CD8-positive, alpha-beta T cell (primary cell): ENCODE measurements at regions of chr16 and their contacts with region 1.

Region 1: GRCh38 chr16:20887207-20887606 is 13.0 kb downstream of the DCUN1D3 start:
- DNase-seq: no peak
- ATAC-seq: no peak
- H3K4me3 ChIP-seq: no peak overlapping the region
- H3K4me3 Mint-ChIP-seq: no peak overlapping the region
- H3K27ac ChIP-seq: no peak overlapping the region
- H3K27ac Mint-ChIP-seq: no peak overlapping the region
- H3K4me1 ChIP-seq: no peaks in the 10 kb centered on the region
- H3K4me1 Mint-ChIP-seq: peaks cover 14% of the 10 kb centered on the region
- H3K27me3 ChIP-seq: no peaks in the 10 kb centered on the region
- H3K27me3 Mint-ChIP-seq: no peaks in the 10 kb centered on the region
- CTCF ChIP-seq: no peak

Region 2: DNA sequence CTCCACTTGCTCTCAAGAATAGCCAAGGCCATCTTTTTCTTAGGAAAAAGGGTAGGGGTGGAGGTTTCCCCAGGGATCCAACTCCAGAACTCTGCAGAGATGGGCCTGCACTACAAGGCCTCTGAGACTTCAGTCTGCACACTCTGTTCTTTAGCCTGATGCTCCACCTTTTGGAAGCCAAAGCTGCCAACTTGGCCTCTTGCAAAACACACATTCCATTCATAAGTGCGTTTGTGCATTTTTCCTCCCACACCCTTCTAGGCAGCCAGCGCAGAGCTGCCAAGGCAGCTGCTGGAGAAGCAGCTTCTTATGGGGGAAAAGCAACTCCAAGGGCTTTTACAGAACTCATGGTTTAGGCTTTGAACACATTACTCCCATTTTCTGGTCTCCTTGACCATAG is 35.6 kb before region 1 on chr16:
- CTCF ChIA-PET with region 1: no interaction called
- POLR2A ChIA-PET with region 1: no interaction called
- intact Hi-C with region 1: no loop called
- DNase-seq: no peak
- ATAC-seq: no peak
- H3K4me3 ChIP-seq: no peak overlapping the region
- H3K4me3 Mint-ChIP-seq: no peak overlapping the region
- H3K27ac ChIP-seq: no peak overlapping the region
- H3K27ac Mint-ChIP-seq: no peak overlapping the region
- H3K4me1 ChIP-seq: no peaks in the 10 kb centered on the region
- H3K4me1 Mint-ChIP-seq: peaks cover 5% of the 10 kb centered on the region
- H3K27me3 ChIP-seq: no peaks in the 10 kb centered on the region
- H3K27me3 Mint-ChIP-seq: no peaks in the 10 kb centered on the region
- CTCF ChIP-seq: no peak

Region 3: DNA sequence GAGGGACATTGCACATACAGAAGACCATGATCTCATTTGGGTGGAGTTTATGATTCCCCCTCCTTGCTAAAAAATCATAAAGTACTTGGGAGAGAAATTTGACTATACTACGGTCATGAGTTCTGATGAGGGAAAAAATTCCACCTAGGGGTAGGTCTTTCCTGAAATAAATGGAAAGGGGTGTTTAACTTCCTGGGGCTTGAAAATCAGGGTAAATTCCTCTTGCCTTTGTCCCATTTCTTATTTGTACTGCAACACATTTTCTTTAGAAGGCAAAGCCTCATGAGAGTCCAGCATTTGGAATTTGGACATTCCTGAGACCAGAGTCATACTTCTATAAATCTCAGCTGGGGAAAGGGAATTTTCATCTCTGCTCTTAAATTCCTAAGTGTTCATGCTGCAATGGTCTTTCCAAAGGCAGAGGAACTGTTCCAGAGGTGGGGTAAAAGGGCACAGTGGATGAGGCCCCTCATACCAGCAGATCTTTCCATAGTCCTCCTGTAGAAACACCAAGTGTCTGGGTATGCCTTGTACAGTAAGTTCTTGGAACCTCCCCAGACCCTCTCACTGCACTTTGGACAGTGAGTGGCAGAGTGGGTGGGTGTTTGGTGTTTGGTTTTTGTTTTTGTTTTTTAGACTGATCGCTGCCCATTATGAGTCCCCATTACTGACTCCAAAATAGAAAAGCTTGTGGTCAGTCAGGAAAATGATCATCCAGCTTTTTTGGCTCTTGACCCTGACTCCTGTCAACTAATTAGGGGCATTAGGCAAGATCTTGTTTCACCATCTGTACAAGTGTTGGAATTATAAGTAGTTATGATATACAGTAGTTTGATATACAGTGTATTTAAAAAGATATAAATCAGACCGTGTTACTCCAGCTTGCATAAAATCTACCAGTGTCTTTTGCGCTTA is 19.4 kb after region 1 on chr16:
- CTCF ChIA-PET with region 1: no interaction called
- POLR2A ChIA-PET with region 1: interaction called, 4 read pairs
- intact Hi-C with region 1: loop called in 1 of 2 experiments (anchors 2 kb)
- DNase-seq: no peak
- ATAC-seq: no peak
- H3K4me3 ChIP-seq: no peak overlapping the region
- H3K4me3 Mint-ChIP-seq: no peak overlapping the region
- H3K27ac ChIP-seq: no peak overlapping the region
- H3K27ac Mint-ChIP-seq: no peak overlapping the region
- H3K4me1 ChIP-seq: peaks cover 21% of the 10 kb centered on the region
- H3K4me1 Mint-ChIP-seq: peaks cover 48% of the 10 kb centered on the region
- H3K27me3 ChIP-seq: no peaks in the 10 kb centered on the region
- H3K27me3 Mint-ChIP-seq: no peaks in the 10 kb centered on the region
- CTCF ChIP-seq: no peak